ENCODE measurements at regions of chr14 and their contacts with region 1.

Region 1: GRCh38 chr14:51780006-51780692 is 80.3 kb upstream of the GNG2 start:
- DNase-seq: peak; percentile 83
- ATAC-seq: peak; percentile 56
- H3K4me3 Mint-ChIP-seq: no peak overlapping the region
- H3K27ac Mint-ChIP-seq: no peak overlapping the region
- H3K4me1 Mint-ChIP-seq: peaks cover 26% of the 10 kb centered on the region
- H3K27me3 Mint-ChIP-seq: peaks cover 4% of the 10 kb centered on the region

Region 2: DNA sequence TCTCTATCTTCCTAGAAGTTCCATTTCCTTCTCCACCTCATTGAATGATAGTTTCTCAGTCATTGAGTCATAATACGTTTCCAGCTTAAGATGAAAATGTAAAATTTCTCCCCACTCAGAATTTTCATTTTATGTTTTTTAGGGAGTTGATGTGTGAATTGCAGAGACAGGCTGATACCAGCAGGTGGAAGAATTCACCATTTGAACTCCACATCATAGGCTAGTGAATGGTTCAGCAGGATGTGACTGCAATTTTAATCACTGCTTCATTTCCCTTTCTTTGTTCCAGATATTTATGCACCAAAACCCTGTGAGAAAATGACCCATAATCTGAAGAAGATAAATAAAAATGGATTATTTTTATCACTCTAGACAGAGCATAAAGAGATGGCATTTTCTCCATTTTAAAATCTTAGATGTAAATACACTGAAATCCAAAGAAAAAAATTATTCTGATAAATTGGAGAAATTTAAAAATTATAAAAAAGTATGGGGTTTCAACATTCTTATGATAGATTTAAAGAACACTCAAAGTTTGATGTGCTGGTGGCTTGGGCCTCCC is 825.3 kb before region 1 on chr14:
- CTCF ChIA-PET with region 1: interaction called, 3 read pairs
- POLR2A ChIA-PET with region 1: no interaction called
- intact Hi-C with region 1: loop called in 1 of 2 experiments (anchors 1 kb)
- DNase-seq: no peak
- ATAC-seq: peak; percentile 63
- H3K4me3 Mint-ChIP-seq: no peak overlapping the region
- H3K27ac Mint-ChIP-seq: no peak overlapping the region
- H3K4me1 Mint-ChIP-seq: peaks cover 13% of the 10 kb centered on the region
- H3K27me3 Mint-ChIP-seq: no peaks in the 10 kb centered on the region

Region 3: DNA sequence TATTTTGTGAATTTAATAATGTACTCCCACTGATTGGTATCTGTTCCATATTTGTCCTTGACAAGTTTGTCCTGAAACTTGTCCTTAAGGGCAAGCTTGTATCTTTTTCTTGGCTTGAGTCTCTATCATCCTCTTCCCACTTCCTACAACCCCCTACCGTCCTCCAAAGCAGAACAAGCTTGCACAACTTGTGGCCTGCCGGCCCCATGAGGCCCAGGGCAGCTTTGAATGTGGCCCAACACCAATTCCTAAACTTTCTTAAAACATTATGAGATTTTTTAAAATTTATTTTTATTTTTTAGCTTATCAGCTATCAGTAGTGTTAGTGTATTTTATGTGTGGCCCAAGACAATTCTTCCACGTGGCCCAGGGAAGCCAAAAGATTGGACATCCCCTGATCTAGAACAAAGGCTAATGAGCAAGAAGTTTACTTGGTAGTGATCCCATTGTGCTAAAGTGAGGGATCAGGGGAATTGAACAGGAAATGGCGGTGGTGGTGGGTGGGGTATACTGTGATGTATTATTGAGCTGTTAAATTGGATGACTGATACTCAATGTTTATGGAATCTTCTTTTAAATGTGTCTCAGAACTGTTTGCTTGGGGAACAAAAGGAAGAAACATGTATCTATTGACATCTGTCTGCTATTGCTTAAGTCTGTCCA is 502.3 kb before region 1 on chr14:
- CTCF ChIA-PET with region 1: interaction called, 49 read pairs
- POLR2A ChIA-PET with region 1: no interaction called
- intact Hi-C with region 1: loop called (anchors 1 to 2 kb)
- DNase-seq: no peak
- ATAC-seq: no peak
- H3K4me3 Mint-ChIP-seq: no peak overlapping the region
- H3K27ac Mint-ChIP-seq: no peak overlapping the region
- H3K4me1 Mint-ChIP-seq: no peaks in the 10 kb centered on the region
- H3K27me3 Mint-ChIP-seq: no peaks in the 10 kb centered on the region

Region 4: DNA sequence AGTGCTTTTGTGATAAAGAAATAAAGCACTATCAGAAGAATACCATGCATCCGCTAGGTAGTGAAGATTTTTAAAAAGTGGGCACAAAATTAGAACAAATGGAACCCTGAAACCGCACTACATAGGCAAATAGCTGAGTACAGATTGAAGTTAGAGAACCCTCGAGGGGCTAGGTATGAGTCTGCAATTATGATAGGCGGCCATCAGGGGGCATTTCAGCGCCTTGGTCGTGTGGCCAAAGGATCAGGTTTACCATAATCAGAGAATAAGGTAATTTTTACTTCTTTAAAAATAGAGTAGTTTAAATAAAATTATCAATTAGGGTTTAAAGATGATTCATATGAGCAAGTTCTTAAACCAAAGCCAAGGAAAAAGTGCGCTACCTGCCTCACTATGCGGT is 410.3 kb before region 1 on chr14:
- CTCF ChIA-PET with region 1: interaction called, 4 read pairs
- POLR2A ChIA-PET with region 1: no interaction called
- intact Hi-C with region 1: loop called (anchors 1 to 2 kb)
- DNase-seq: peak; percentile 52
- ATAC-seq: no peak
- H3K4me3 Mint-ChIP-seq: no peak overlapping the region
- H3K27ac Mint-ChIP-seq: no peak overlapping the region
- H3K4me1 Mint-ChIP-seq: no peaks in the 10 kb centered on the region
- H3K27me3 Mint-ChIP-seq: peaks cover 7% of the 10 kb centered on the region

Region 5: DNA sequence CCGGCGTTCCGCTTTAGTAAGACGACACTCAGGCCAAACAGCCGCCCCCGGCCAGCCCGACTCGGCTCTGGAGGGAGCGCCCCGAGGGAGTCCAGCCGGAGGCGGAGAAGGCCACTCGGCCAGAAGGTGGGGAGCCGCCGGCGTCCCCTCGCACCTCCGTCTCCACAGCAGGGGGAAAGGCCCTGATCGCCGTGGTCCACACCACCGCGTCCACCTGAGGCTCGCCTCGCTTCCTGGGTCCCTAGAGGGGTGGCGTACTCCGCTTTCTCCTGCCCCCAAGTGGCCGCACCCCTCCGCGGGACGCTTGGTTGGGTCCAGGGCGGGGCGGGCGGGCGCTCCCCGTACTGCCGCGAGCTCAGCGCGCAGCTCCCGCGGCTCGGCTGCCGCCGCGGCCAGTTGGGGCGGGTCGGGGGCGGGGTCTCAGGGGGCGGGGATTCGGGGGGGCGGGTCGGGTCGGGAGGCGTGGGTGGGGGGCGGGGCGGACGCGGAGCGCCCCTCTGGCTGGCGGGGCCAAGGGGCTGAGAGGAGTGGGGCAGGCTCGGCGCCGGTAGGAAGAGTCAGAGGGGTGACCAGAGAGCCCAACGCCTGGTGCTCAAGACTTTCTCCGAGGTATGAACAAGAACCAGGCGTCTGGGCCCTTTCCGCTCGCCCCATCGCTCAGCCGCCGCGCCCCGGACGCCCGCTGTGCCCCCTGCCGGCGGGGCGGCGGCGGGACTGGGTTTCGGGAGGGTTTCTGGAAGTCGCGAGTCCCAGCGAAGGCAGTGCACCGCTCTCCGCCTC is 128.6 kb before region 1 on chr14 and contains the start of gene FRMD6:
- CTCF ChIA-PET with region 1: interaction called, 13 read pairs
- POLR2A ChIA-PET with region 1: no interaction called
- intact Hi-C with region 1: loop called (anchors 2 kb)
- DNase-seq: peak; percentile 90
- ATAC-seq: peak; percentile 86
- H3K4me3 Mint-ChIP-seq: peak within 1 kb of the TSS; percentile 80
- H3K27ac Mint-ChIP-seq: peak within 1 kb of the TSS; percentile 79
- H3K4me1 Mint-ChIP-seq: peaks cover 19% of the 10 kb centered on the region
- H3K27me3 Mint-ChIP-seq: peaks cover 12% of the 10 kb centered on the region
- total RNA-seq, gene FRMD6: 7.5 to 8.0 TPM

Region 6: GRCh38 chr14:51750542-51750941 is 29.6 kb before region 1 on chr14:
- CTCF ChIA-PET with region 1: no interaction called
- POLR2A ChIA-PET with region 1: no interaction called
- intact Hi-C with region 1: no loop called
- DNase-seq: peak; percentile 50
- ATAC-seq: no peak
- H3K4me3 Mint-ChIP-seq: no peak overlapping the region
- H3K27ac Mint-ChIP-seq: no peak overlapping the region
- H3K4me1 Mint-ChIP-seq: no peaks in the 10 kb centered on the region
- H3K27me3 Mint-ChIP-seq: peaks cover 2% of the 10 kb centered on the region

Region 7: DNA sequence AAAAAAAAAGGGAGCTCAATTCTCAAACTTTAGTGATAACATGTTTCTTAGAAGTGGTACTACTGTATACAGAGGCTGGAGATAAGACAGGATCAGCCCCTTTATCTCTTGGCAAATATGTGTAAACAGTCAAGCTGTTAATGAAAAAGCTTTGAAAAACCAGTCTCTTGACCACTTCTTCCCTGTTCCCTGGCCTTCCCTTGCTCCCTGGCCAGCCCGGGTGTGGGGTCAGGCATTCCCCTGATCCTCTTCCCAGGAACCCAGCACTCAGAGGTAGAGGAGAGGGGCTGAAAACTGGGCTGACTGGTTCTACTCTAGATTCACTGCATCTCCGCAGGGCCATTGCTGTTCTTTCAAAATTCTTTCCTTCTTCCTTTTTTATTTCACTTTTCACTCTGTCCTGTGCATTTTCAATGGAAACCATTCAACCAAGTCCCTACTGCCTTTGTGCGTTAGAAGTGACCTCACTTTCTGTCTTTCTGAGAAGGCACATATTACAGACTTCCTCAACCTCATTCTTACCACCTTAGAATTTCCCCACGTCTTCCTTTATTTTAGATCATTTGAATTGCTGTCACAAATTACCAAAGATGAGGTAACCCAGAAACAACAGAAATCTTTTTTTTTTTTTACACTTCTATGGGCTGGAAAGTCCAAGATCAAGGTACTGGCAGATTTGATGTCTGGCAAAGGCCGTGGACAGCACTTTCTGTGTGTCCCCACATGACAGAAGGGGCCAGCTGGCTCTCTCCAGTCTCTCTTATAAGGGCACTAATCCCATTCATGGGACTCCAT is 86.0 kb after region 1 on chr14:
- CTCF ChIA-PET with region 1: interaction called, 4 read pairs
- POLR2A ChIA-PET with region 1: no interaction called
- intact Hi-C with region 1: loop called (anchors 5 kb)
- DNase-seq: no peak
- ATAC-seq: peak; percentile 51
- H3K4me3 Mint-ChIP-seq: no peak overlapping the region
- H3K27ac Mint-ChIP-seq: no peak overlapping the region
- H3K4me1 Mint-ChIP-seq: peaks cover 20% of the 10 kb centered on the region
- H3K27me3 Mint-ChIP-seq: no peaks in the 10 kb centered on the region

Measured in activated CD4-positive, alpha-beta T cell treated with anti-CD3 and anti-CD28 coated beads for 36 hours (primary cell).